CD8-positive, alpha-beta T cell (primary cell): ENCODE measurements at regions of chr1 and their contacts with region 1.

Region 1: GRCh38 chr1:202998836-202999750 is 8.1 kb upstream of the TMEM183A start:
- DNase-seq: peak; percentile 30 to 79 (median 71)
- ATAC-seq: peak; percentile 70
- H3K4me3 ChIP-seq: no peak overlapping the region
- H3K4me3 Mint-ChIP-seq: peak overlapping the region; percentile 32
- H3K27ac ChIP-seq: no peak overlapping the region
- H3K27ac Mint-ChIP-seq: no peak overlapping the region
- H3K4me1 ChIP-seq: no peaks in the 10 kb centered on the region
- H3K4me1 Mint-ChIP-seq: peaks cover 4% of the 10 kb centered on the region
- H3K27me3 ChIP-seq: peaks cover 0 to 3% of the 10 kb centered on the region in 2 experiments
- H3K27me3 Mint-ChIP-seq: peaks cover 23% of the 10 kb centered on the region
- CTCF ChIP-seq: peak; percentile 85

Region 2: DNA sequence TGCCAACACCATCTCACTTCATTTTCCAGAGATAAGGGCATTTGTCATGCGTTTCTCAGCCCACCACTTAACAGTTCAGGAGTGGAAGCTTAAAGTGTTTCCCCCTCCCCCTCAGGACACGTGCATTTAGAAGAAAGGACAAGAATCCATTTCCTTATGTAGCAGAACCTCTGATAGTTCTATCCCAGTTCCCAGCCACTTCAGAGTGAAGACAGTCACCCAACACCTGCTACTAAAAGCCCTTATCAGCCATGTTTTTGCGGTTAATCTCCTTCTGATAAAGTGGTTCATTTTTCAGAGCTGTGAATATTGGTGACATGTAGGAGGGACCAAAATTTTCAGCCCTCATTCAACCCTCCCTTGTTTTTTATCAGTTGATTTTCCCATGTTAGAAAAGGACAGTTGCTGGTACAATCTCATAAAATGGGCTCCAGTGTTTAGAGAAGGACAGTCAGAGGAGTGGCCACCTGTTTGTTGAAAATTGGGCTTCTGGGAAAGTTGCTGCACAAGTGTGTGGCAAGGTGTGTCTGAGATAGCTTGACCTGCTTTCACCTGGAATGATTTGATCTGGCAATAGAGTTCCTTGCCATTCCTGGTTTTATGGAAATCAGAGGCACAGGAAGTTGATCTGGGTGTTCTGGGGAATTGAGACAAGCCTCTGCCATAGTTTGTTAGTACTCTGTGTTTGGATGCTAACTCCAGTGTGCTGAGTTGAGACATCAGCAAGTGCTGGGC is 536.6 kb before region 1 on chr1:
- CTCF ChIA-PET with region 1: no interaction called
- POLR2A ChIA-PET with region 1: no interaction called
- intact Hi-C with region 1: loop called in 1 of 2 experiments (anchors 10 kb)
- DNase-seq: no peak
- ATAC-seq: no peak
- H3K4me3 ChIP-seq: no peak overlapping the region
- H3K4me3 Mint-ChIP-seq: no peak overlapping the region
- H3K27ac ChIP-seq: no peak overlapping the region
- H3K27ac Mint-ChIP-seq: peak overlapping the region; percentile 16
- H3K4me1 ChIP-seq: no peaks in the 10 kb centered on the region
- H3K4me1 Mint-ChIP-seq: no peaks in the 10 kb centered on the region
- H3K27me3 ChIP-seq: no peaks in the 10 kb centered on the region
- H3K27me3 Mint-ChIP-seq: no peaks in the 10 kb centered on the region
- CTCF ChIP-seq: no peak

Region 3: DNA sequence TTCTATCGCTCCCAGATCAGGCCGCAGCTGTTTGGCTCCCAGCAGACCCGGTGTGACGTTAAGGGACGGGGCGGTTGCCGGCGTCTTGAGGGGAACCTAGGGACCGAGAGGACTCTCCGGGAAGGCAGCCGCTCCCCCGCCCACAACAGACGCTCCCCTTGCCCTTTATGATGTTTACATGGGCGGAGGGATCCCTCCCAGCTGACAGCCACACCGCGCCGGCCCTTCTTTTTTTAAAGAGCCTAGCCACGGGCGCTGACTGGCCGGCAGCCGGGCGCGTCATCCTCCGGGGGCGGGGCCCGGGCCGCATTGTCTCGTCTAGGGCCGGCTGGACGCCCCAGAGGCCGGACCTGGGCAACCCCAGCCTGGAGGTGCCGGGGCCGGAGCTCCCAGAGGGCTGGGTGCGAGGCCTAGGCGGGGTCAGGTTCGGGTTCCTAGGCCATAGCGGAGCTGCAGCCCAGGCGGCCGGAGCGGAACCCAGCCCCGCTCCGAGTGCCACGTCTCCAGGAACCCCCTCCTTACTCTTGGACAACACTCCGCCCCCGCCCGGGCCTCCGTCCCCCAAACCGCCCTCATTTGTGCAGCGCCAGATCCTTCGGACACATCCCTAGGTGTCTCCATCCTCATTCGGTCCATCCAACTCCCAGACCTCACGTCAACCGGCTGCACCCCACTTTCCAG is 188.3 kb before region 1 on chr1 and contains the start of gene PCAT6:
- CTCF ChIA-PET with region 1: no interaction called
- POLR2A ChIA-PET with region 1: no interaction called
- intact Hi-C with region 1: loop called in 1 of 2 experiments (anchors 10 kb)
- DNase-seq: peak; percentile 67 to 93 (median 84)
- ATAC-seq: peak; percentile 67
- H3K4me3 ChIP-seq: peak within 1 kb of the TSS; percentile 80 to 94
- H3K4me3 Mint-ChIP-seq: peak within 1 kb of the TSS; percentile 88
- H3K27ac ChIP-seq: peak within 1 kb of the TSS; percentile 51 to 72
- H3K27ac Mint-ChIP-seq: peak within 1 kb of the TSS; percentile 90
- H3K4me1 ChIP-seq: peaks cover 20% of the 10 kb centered on the region
- H3K4me1 Mint-ChIP-seq: peaks cover 34% of the 10 kb centered on the region
- H3K27me3 ChIP-seq: no peaks in the 10 kb centered on the region
- H3K27me3 Mint-ChIP-seq: no peaks in the 10 kb centered on the region
- CTCF ChIP-seq: no peak
- total RNA-seq, gene PCAT6: 0.92 to 1.6 TPM

Region 4: GRCh38 chr1:202926720-202927491 is 72.2 kb before region 1 on chr1 and contains the start of gene KLHL12:
- CTCF ChIA-PET with region 1: interaction called, 10 read pairs
- POLR2A ChIA-PET with region 1: interaction called, 3 read pairs
- intact Hi-C with region 1: loop called (anchors 1 kb)
- DNase-seq: peak; percentile 87 to 97 (median 95)
- ATAC-seq: peak; percentile 95
- H3K4me3 ChIP-seq: peak within 1 kb of the TSS; percentile 97 to 98
- H3K4me3 Mint-ChIP-seq: peak within 1 kb of the TSS; percentile 96
- H3K27ac ChIP-seq: peak within 1 kb of the TSS; percentile 95 to 97
- H3K27ac Mint-ChIP-seq: peak within 1 kb of the TSS; percentile 97
- H3K4me1 ChIP-seq: peaks cover 18% of the 10 kb centered on the region
- H3K4me1 Mint-ChIP-seq: peaks cover 31% of the 10 kb centered on the region
- H3K27me3 ChIP-seq: no peaks in the 10 kb centered on the region
- H3K27me3 Mint-ChIP-seq: no peaks in the 10 kb centered on the region
- CTCF ChIP-seq: peak; percentile 87
- total RNA-seq, gene KLHL12: 17.9 to 19.2 TPM

Region 5: DNA sequence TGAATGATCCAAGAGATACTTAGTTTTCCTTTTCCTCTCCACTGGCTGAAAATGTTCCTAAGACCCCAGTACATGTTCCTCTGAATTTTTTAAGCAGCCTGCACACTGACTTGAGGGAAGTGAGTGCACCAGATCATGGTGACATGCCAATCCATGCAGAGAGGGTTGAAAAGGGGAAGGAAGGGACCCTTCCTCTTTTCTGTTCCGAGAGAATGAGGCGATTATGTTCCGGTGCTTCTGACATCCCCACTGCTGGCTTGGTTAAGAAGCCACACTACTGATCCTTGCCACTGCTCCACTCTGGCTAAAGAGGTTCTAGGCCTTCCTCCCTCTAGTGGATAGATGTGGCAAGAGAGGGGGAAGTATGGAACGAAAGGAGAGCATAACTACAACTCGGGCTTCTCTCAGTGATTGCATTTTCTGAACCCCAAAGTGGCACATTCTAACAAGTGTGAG is 30.2 kb before region 1 on chr1:
- CTCF ChIA-PET with region 1: interaction called, 27 read pairs
- POLR2A ChIA-PET with region 1: interaction called, 9 read pairs
- intact Hi-C with region 1: no loop called
- DNase-seq: peak in 4 of 9 experiments; percentile 14 to 64 (median 40)
- ATAC-seq: peak; percentile 19
- H3K4me3 ChIP-seq: no peak overlapping the region
- H3K4me3 Mint-ChIP-seq: peak overlapping the region; percentile 49
- H3K27ac ChIP-seq: no peak overlapping the region
- H3K27ac Mint-ChIP-seq: no peak overlapping the region
- H3K4me1 ChIP-seq: peaks cover 24% of the 10 kb centered on the region
- H3K4me1 Mint-ChIP-seq: peaks cover 32% of the 10 kb centered on the region
- H3K27me3 ChIP-seq: no peaks in the 10 kb centered on the region
- H3K27me3 Mint-ChIP-seq: no peaks in the 10 kb centered on the region
- CTCF ChIP-seq: peak; percentile 28

Region 6: GRCh38 chr1:202987922-202988583 is 11.0 kb before region 1 on chr1:
- CTCF ChIA-PET with region 1: interaction called, 14 read pairs
- POLR2A ChIA-PET with region 1: no interaction called
- intact Hi-C with region 1: no loop called
- DNase-seq: no peak
- ATAC-seq: no peak
- H3K4me3 ChIP-seq: no peak overlapping the region
- H3K4me3 Mint-ChIP-seq: no peak overlapping the region
- H3K27ac ChIP-seq: no peak overlapping the region
- H3K27ac Mint-ChIP-seq: no peak overlapping the region
- H3K4me1 ChIP-seq: no peaks in the 10 kb centered on the region
- H3K4me1 Mint-ChIP-seq: no peaks in the 10 kb centered on the region
- H3K27me3 ChIP-seq: peaks cover 0 to 3% of the 10 kb centered on the region in 2 experiments
- H3K27me3 Mint-ChIP-seq: peaks cover 20% of the 10 kb centered on the region
- CTCF ChIP-seq: no peak